ENCODE measurements at regions of chr2 and their contacts with region 1.

Region 1: GRCh38 chr2:205766779-205767359 is 84.6 kb downstream of the NRP2 start:
- DNase-seq: peak; percentile 50 to 64
- ATAC-seq: peak in 1 of 8 donors; percentile 31
- H3K4me3 ChIP-seq: no peak overlapping the region
- H3K27ac ChIP-seq: no peak overlapping the region
- H3K4me1 ChIP-seq: peaks cover 0 to 28% (median 13%) of the 10 kb centered on the region in 9 donors
- H3K27me3 ChIP-seq: peaks cover 0 to 17% (median 4%) of the 10 kb centered on the region in 7 donors
- CTCF ChIP-seq: peak; percentile 71 to 93 (median 84)

Region 2: DNA sequence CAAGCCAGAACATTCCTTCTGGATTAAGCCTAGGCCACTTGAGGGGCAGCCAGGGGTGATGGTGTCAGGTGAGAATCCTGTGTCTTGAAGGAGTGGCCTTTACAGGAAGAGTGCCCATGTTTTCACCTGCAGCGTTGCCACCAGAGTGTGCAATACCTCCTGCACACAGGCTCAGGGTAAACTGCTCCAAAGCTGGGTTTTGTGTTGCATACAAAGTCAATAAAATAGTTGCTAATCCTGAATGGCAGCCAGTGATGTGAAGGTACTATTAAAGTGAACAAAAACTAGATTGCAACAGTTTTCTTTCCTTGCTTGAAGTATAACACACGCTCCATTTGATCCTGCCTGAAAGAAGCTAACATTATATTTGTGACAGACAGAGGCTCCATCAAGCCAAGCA is 149.0 kb before region 1 on chr2:
- intact Hi-C with region 1: no loop called
- DNase-seq: no peak
- ATAC-seq: no peak
- H3K4me3 ChIP-seq: no peak overlapping the region
- H3K27ac ChIP-seq: no peak overlapping the region
- H3K4me1 ChIP-seq: no peaks in the 10 kb centered on the region
- H3K27me3 ChIP-seq: no peaks in the 10 kb centered on the region
- CTCF ChIP-seq: no peak

Region 3: GRCh38 chr2:205685314-205686055 is 81.4 kb before region 1 on chr2:
- intact Hi-C with region 1: loop called in 1 of 10 experiments (anchors 5 kb)
- DNase-seq: no peak
- ATAC-seq: peak in 6 of 8 donors; percentile 1 to 58 (median 14)
- H3K4me3 ChIP-seq: peak overlapping the region; percentile 37 to 78 (median 64)
- H3K27ac ChIP-seq: peak overlapping the region in 8 of 10 donors; percentile 30 to 91 (median 64)
- H3K4me1 ChIP-seq: peaks cover 8 to 81% (median 58%) of the 10 kb centered on the region in 9 donors
- H3K27me3 ChIP-seq: peaks cover 0 to 69% (median 25%) of the 10 kb centered on the region in 7 donors
- CTCF ChIP-seq: no peak

Region 4: GRCh38 chr2:205885492-205886099 is 118.7 kb after region 1 on chr2:
- intact Hi-C with region 1: loop called in 8 of 10 experiments (anchors 2 to 10 kb)
- DNase-seq: peak; percentile 76 to 87
- ATAC-seq: peak; percentile 78 to 95 (median 89)
- H3K4me3 ChIP-seq: no peak overlapping the region
- H3K27ac ChIP-seq: no peak overlapping the region
- H3K4me1 ChIP-seq: peaks cover 0 to 4% (median 0%) of the 10 kb centered on the region in 9 donors
- H3K27me3 ChIP-seq: no peaks in the 10 kb centered on the region
- CTCF ChIP-seq: peak; percentile 75 to 92 (median 86)

Region 5: DNA sequence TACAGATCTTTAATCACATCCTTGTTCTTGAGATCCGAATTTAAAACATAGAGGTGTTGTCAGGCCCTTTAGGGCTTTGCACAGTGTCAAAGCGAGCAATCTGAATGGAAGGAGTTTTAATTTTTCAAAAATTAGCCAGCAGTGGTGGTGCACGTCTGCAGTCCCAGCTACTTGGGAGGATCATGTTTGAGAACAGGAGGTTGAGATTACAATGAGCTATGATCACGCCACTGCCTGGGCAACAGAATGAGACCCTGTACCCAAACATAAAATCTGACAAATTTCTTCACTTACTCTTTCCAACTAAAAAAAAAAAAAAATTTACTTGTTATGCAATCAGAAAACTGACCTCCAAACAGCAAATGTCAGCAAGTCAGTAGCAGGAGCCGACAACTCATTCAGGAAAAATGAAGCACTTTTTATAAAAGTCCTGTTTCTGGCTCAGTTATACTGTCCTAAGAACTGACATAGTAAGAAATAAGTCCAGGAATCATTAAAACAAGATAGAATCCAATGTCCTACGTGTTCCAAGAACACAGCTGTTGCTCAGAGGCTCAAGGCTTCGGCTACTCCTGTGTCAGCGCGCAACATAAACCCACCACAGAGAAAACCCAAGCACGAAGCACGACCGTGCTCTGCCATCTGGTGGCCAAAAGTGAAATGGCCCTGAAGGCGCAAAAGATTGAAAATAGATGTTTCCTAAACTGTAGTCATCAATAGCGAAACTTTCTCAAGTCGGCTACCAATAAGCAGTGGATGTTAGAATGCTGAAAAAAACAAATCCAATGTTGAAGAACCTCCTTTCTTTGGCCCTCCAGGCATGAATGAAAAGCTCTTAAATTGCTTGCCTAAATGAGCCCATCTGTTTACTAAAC is 181.0 kb after region 1 on chr2:
- intact Hi-C with region 1: loop called in 3 of 10 experiments (anchors 5 kb)
- DNase-seq: peak; percentile 57 to 65
- ATAC-seq: peak; percentile 71 to 93 (median 90)
- H3K4me3 ChIP-seq: no peak overlapping the region
- H3K27ac ChIP-seq: peak overlapping the region in 3 of 10 donors; percentile 2 to 22 (median 2)
- H3K4me1 ChIP-seq: peaks cover 0 to 33% (median 0%) of the 10 kb centered on the region in 9 donors
- H3K27me3 ChIP-seq: peaks cover 0 to 8% (median 0%) of the 10 kb centered on the region in 7 donors
- CTCF ChIP-seq: peak; percentile 62 to 99 (median 91)

Region 6: GRCh38 chr2:205967391-205968075 is 200.7 kb after region 1 on chr2:
- intact Hi-C with region 1: no loop called
- DNase-seq: no peak
- ATAC-seq: no peak
- H3K4me3 ChIP-seq: no peak overlapping the region
- H3K27ac ChIP-seq: no peak overlapping the region
- H3K4me1 ChIP-seq: no peaks in the 10 kb centered on the region
- H3K27me3 ChIP-seq: no peaks in the 10 kb centered on the region
- CTCF ChIP-seq: no peak